ENCODE measurements at regions of chr9 and their contacts with region 1.

Region 1: GRCh38 chr9:83980395-83981125 is at the start of gene RMI1:
- DNase-seq: peak; percentile 99
- H3K4me3 Mint-ChIP-seq: peak within 1 kb of the TSS; percentile 97
- H3K27ac Mint-ChIP-seq: peak within 1 kb of the TSS; percentile 96
- H3K4me1 Mint-ChIP-seq: peaks cover 51% of the 10 kb centered on the region
- H3K27me3 Mint-ChIP-seq: no peaks in the 10 kb centered on the region
- total RNA-seq, gene RMI1: 22.1 to 22.4 TPM

Region 2: GRCh38 chr9:83622939-83623678 is 357.5 kb before region 1 on chr9 and contains the start of gene IDNK:
- CTCF ChIA-PET with region 1: no interaction called
- POLR2A ChIA-PET with region 1: interaction called, 19 read pairs
- DNase-seq: peak; percentile 71
- H3K4me3 Mint-ChIP-seq: peak within 1 kb of the TSS; percentile 85
- H3K27ac Mint-ChIP-seq: peak within 1 kb of the TSS; percentile 92
- H3K4me1 Mint-ChIP-seq: peaks cover 35% of the 10 kb centered on the region
- H3K27me3 Mint-ChIP-seq: peaks cover 2% of the 10 kb centered on the region
- total RNA-seq, gene IDNK: 8.2 to 9.0 TPM

Region 3: DNA sequence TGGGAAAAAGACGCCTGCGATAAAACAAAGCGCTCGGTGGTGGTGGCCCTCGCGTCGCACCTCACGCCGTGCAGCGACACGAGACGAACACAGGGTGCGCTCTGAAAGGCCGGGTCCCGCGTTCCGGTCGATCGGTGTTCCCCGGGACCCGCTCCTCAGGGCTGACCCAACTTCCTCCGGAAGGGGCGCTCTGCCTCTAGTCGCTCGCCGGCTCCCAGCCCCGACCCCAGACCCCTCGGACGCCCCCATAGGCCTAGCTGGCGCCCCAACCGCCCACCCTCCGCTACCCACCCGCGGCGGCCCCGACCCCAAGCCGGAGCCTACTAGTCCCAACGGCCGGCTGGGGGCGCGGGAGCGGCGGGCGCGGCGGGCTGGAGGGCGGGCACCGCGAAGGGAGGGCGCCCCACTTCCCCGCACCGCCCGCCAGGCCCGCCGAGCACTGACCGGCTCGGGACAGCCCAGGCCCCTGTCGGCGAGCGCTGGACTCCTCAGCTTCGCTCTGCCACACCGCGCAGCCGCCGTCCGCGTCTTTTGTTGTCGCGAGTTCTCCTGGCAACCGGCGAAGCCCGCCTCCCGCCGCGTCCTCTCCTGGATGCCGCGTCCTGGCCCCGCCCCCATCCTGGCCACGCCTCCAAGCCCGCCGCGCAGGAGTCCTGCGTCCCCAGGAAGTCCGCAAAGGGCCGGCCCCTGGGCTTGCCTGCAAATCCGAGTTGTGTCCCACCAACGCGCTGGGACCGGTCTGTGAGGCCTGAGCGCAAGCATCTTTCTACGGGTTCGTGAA is 59.4 kb before region 1 on chr9 and contains the start of gene KIF27:
- CTCF ChIA-PET with region 1: interaction called, 12 read pairs
- POLR2A ChIA-PET with region 1: interaction called, 59 read pairs
- DNase-seq: peak; percentile 98
- H3K4me3 Mint-ChIP-seq: peak within 1 kb of the TSS; percentile 81
- H3K27ac Mint-ChIP-seq: peak within 1 kb of the TSS; percentile 88
- H3K4me1 Mint-ChIP-seq: peaks cover 18% of the 10 kb centered on the region
- H3K27me3 Mint-ChIP-seq: no peaks in the 10 kb centered on the region
- total RNA-seq, gene KIF27: 2.3 TPM

Region 4: DNA sequence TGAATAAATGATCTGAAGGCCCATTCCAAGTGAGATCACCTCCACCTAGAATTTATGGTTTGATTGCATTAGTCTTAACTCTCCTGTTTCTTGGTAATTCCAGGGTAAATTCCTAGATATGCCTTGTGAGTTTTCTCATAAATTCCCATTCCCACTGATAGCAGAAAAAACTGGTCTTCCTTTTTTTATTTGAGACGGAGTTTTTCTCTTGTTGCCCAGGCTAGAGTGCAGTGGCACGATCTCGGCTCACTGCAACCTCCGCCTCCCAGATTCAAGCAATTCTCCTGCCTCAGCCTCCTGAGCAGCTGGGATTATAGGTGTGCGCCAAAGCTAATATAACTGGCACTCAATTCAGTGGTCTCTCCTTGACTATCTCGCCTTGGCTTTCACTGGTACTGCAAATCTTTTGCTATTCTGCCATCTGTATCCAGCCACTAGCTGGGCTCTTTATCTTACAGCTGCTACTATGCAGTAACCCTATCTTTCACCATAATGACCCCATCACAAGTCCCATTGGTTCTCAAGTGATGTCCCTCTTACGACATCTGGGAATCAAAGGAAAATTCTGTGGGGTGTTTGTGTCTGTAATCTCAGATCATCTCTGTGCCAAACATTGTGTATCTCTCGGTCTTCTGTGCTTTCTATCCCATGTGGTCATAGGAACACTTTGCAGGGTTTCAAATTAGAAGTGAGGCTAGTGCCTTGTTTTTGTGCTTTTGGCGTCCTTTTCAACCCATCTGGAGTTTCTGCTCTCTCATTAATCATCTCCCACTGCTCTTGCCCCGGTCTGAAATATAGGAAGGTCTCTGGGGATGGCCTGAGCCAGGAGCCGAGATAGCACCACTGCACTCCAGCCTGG is 15.0 kb before region 1 on chr9:
- CTCF ChIA-PET with region 1: interaction called, 4 read pairs
- POLR2A ChIA-PET with region 1: interaction called, 34 read pairs
- DNase-seq: no peak
- H3K4me3 Mint-ChIP-seq: no peak overlapping the region
- H3K27ac Mint-ChIP-seq: no peak overlapping the region
- H3K4me1 Mint-ChIP-seq: peaks cover 6% of the 10 kb centered on the region
- H3K27me3 Mint-ChIP-seq: no peaks in the 10 kb centered on the region

Region 5: DNA sequence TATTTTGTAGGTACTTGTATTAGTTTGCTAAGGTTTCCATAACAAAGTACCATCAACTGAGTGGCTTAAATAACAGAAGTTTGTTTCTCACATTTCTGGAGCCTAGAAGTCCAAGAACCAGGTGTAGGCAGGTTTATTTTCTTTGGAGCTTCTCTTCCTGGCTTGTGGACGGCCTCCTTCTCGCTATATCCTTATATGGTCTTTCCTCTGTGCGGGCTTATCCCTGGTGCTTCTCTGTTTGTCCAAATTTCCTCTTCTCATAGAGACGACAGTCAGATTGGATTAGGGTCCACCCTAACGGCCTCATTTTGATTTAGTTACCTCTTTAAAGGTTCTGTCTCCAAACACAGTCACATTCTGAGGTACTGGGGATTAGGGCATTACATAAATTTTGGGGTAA is 88.3 kb after region 1 on chr9:
- CTCF ChIA-PET with region 1: no interaction called
- POLR2A ChIA-PET with region 1: no interaction called
- DNase-seq: no peak
- H3K4me3 Mint-ChIP-seq: no peak overlapping the region
- H3K27ac Mint-ChIP-seq: no peak overlapping the region
- H3K4me1 Mint-ChIP-seq: no peaks in the 10 kb centered on the region
- H3K27me3 Mint-ChIP-seq: no peaks in the 10 kb centered on the region

Region 6: GRCh38 chr9:84296146-84296843 is 315.7 kb after region 1 on chr9:
- CTCF ChIA-PET with region 1: interaction called, 3 read pairs
- POLR2A ChIA-PET with region 1: interaction called, 17 read pairs
- DNase-seq: peak; percentile 34
- H3K4me3 Mint-ChIP-seq: no peak overlapping the region
- H3K27ac Mint-ChIP-seq: peak overlapping the region; percentile 80
- H3K4me1 Mint-ChIP-seq: peaks cover 56% of the 10 kb centered on the region
- H3K27me3 Mint-ChIP-seq: no peaks in the 10 kb centered on the region

Measured in activated CD4-positive, alpha-beta memory T cell treated with anti-CD3 and anti-CD28 coated beads, Interleukin-2, amount 10 ng/mL, durations not matched to agents 7 days and 5 days (primary cell).